WTC11 (cell line): ENCODE measurements at regions of chr10 and their contacts with region 1.

Region 1: DNA sequence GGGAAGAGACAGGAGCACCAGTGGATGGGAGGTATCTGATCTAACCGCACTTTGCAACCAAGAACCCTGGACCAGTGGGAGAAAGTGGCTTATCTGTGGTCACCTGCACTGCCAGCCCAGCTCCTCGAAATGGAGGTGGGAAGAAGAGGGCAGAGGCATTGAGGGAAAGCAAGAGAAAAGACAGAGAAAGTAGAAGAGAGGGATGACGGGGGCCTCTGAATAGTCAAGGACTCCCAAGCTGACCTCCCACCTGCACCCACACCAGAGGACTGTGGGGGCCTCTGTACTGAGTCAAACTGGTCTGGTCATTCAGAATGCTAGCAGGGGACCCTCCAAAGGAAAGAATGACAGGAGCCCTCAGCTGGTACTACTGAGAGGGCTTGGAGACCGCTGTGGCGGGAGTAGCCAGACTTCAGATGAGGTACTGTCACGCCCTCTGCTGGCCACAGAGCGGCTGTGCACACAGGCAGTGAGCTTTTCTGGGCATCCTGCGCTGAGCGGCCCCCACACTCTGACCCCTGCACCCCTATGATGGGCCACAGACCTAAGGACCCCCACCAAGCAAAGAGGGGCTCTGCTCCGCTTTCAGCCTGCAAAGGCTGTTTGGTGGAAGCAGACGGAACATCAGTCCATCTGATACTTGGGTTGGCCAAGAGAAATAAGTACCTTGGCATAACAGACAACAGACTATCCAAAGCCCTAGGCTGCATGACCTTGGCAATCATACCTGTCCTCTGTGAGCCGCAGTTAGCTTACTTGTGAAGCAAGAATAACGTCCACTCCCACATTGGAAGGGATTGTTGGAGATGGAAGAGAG is 112.9 kb downstream of the COL13A1 start:
- DNase-seq: peak; percentile 87
- ATAC-seq: peak; percentile 89
- H3K4me3 Mint-ChIP-seq: no peak overlapping the region
- H3K27ac Mint-ChIP-seq: no peak overlapping the region
- H3K4me1 Mint-ChIP-seq: peaks cover 23% of the 10 kb centered on the region
- H3K27me3 Mint-ChIP-seq: peaks cover 3% of the 10 kb centered on the region; the same call in 1 of the 2 replicates
- CTCF ChIP-seq: peak; percentile 99

Region 2: DNA sequence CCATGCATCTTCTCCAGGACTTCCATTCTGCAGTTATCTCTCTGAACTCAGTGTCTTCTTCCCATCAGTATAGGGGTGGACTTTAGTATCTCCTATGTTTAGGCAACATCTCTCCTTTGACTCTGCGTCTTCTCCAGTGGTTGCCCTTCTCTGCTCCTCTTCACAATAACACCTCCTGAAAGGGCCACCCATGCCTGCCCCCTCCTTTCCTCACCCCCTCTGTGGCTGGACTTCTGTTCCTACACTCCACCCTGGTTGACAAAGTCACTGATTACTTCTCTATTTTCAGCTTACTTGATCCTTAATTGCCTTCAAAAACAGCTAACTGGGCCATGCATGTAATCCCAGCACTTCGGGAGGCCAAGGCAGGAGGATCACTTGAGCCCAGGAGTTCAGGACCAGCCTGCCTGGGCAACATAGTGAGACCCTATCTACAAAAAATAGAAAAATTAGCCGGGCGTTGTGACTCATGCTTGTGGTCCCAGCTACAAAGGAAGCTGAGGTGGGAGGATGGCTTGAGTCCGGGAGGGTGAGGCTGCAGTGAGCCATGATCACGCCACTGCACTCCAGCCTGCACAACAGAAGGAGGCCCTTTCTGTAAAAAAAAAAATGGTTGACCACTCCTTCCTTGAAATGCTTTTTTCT is 813.0 kb before region 1 on chr10:
- CTCF ChIA-PET with region 1: no interaction called
- POLR2A ChIA-PET with region 1: no interaction called
- DNase-seq: no peak
- ATAC-seq: no peak
- H3K4me3 Mint-ChIP-seq: no peak overlapping the region
- H3K27ac Mint-ChIP-seq: no peak overlapping the region
- H3K4me1 Mint-ChIP-seq: peaks cover 4% of the 10 kb centered on the region
- H3K27me3 Mint-ChIP-seq: no peaks in the 10 kb centered on the region
- CTCF ChIP-seq: no peak

Region 3: DNA sequence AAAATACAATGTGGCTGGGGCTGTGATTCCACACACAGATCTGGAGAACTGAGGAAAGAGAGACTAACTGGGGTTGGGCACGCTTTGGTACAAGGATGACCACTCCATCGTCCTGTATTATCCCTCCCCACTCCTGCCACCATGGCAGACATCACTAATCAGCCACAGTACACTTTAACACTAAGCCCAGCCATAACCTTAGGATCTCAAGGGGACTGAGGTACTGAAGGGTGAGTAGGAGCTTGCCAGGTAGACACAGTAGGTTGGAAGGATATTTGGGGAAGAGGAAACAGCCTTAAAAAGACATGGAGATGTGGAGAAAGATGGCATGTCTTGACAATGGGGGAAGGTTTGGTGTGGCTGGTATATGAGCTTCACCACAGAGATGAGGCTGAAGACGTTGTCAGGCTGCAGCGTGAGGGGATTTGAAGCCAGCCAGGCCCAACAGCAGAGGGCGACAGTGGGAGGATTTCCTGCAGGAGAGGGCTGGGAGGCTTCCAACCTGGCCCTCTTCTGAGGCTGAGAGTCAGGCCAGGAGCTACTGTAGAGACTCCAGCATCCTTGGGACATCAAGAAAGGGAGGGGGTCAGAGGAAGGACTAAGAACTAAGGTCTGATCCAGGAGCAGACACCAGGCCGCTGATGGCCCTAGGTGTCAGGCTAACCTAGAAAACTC is 171.5 kb before region 1 on chr10:
- CTCF ChIA-PET with region 1: interaction called, 56 read pairs
- POLR2A ChIA-PET with region 1: no interaction called
- DNase-seq: peak; percentile 79
- ATAC-seq: peak; percentile 92
- H3K4me3 Mint-ChIP-seq: no peak overlapping the region
- H3K27ac Mint-ChIP-seq: no peak overlapping the region
- H3K4me1 Mint-ChIP-seq: 0 out of 2 replicates have a peak, but pooled peaks cover 6% of the 10 kb centered on the region
- H3K27me3 Mint-ChIP-seq: peaks cover 4% of the 10 kb centered on the region
- CTCF ChIP-seq: 0 out of 2 replicates have a peak, but pooled peaks have one; percentile 28

Region 4: GRCh38 chr10:69807122-69807521 is 107.5 kb before region 1 on chr10:
- CTCF ChIA-PET with region 1: interaction called, 92 read pairs
- POLR2A ChIA-PET with region 1: no interaction called
- DNase-seq: no peak
- ATAC-seq: no peak
- H3K4me3 Mint-ChIP-seq: no peak overlapping the region
- H3K27ac Mint-ChIP-seq: no peak overlapping the region
- H3K4me1 Mint-ChIP-seq: peaks cover 38% of the 10 kb centered on the region
- H3K27me3 Mint-ChIP-seq: peaks cover 33% of the 10 kb centered on the region
- CTCF ChIP-seq: no peak

Region 5: GRCh38 chr10:69839696-69840345 is 74.8 kb before region 1 on chr10:
- CTCF ChIA-PET with region 1: interaction called, 13 read pairs
- POLR2A ChIA-PET with region 1: no interaction called
- DNase-seq: no peak
- ATAC-seq: no peak
- H3K4me3 Mint-ChIP-seq: no peak overlapping the region
- H3K27ac Mint-ChIP-seq: no peak overlapping the region
- H3K4me1 Mint-ChIP-seq: peaks cover 43% of the 10 kb centered on the region
- H3K27me3 Mint-ChIP-seq: no peaks in the 10 kb centered on the region
- CTCF ChIP-seq: no peak

Region 6: GRCh38 chr10:69869291-69869961 is 45.2 kb before region 1 on chr10:
- CTCF ChIA-PET with region 1: interaction called, 84 read pairs
- POLR2A ChIA-PET with region 1: interaction called, 3 read pairs
- DNase-seq: no peak
- ATAC-seq: no peak
- H3K4me3 Mint-ChIP-seq: no peak overlapping the region
- H3K27ac Mint-ChIP-seq: no peak overlapping the region
- H3K4me1 Mint-ChIP-seq: peaks cover 93% of the 10 kb centered on the region
- H3K27me3 Mint-ChIP-seq: peaks cover 18% of the 10 kb centered on the region
- CTCF ChIP-seq: no peak

Region 7: DNA sequence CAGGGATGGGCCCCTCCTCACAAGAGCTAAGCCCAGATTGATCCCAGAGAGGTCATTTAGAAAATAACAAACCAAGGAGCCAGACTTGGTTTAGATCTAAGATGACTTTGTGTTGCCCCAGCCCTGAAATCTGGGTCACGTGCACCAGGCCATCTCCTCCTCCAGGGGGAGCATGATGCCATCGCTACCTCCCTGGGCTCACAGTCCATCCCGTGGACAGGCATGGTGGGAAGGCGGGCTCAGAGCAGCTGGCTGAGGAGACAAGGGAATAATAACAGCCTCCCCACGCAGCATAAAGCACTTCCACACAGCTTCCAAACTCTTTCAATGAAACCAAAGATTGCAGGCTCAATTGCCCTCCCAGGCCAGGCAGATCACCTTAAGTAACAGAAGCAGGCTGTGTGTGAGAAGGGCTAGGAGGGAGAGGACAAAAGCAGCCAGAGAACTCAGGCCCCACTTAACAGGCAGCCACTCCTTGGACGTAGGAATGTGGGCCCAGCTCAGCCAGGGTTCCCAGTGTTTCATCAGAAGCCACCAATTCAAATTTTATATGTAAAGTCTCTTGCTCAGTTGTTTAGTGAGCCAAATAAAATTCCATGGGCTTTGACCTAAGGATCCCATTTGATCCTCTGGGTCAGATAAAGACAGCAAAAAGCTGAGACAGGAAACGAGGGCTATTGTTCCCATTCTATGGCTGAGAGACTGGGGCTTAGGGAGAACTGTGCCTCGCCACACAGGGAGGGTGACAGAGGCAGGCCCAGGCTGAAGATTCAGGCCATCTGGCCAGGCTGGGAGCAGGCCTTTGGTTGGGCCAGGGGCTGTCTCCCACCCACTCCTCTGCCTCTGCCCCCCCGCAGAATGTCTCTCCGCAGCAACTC is 12.7 kb before region 1 on chr10:
- CTCF ChIA-PET with region 1: interaction called, 126 read pairs
- POLR2A ChIA-PET with region 1: no interaction called
- DNase-seq: peak; percentile 77
- ATAC-seq: peak; percentile 86
- H3K4me3 Mint-ChIP-seq: no peak overlapping the region
- H3K27ac Mint-ChIP-seq: peak overlapping the region; percentile 86
- H3K4me1 Mint-ChIP-seq: peaks cover 35% of the 10 kb centered on the region
- H3K27me3 Mint-ChIP-seq: peaks cover 3% of the 10 kb centered on the region
- CTCF ChIP-seq: peak; percentile 61; the same call in 1 of the 2 replicates

Region 8: DNA sequence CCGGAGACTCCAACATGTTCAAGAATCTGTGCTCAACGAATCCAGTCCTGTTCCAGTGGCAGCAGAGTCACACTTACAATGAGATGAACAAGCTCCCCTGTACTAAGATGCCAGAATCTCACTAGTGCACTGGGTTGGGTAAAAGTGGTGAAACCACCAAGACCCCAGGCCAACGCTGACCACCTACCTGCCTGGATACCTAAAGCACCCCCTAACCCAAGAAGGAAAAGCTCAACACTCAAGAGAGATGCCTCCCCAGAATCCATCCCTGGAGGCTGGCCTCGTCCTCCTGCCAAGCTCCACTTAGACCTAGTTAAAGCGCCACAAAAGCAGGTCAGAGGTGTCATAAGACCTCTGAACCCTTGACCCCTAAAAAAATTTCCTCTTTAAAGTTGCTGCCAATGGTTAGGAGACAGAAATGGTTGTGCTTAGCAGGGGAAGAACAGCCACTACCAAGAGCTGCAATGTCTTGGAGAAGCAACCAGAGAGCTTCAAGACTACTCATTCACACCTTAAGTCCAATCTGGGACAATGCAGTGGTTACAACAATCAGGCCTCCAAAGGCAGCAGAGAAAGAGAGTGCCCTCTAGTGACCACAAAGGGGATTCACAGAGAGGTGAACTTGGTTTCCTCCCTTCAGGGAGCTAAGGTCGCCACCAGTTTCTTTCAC is 43.4 kb after region 1 on chr10:
- CTCF ChIA-PET with region 1: interaction called, 75 read pairs
- POLR2A ChIA-PET with region 1: interaction called, 3 read pairs
- DNase-seq: peak; percentile 34
- ATAC-seq: peak; percentile 82
- H3K4me3 Mint-ChIP-seq: no peak overlapping the region
- H3K27ac Mint-ChIP-seq: no peak overlapping the region
- H3K4me1 Mint-ChIP-seq: peaks cover 2% of the 10 kb centered on the region
- H3K27me3 Mint-ChIP-seq: peaks cover 10% of the 10 kb centered on the region
- CTCF ChIP-seq: peak; percentile 60

Region 9: GRCh38 chr10:69974551-69975155 is 60.0 kb after region 1 on chr10:
- CTCF ChIA-PET with region 1: no interaction called
- POLR2A ChIA-PET with region 1: no interaction called
- DNase-seq: no peak
- ATAC-seq: no peak
- H3K4me3 Mint-ChIP-seq: no peak overlapping the region
- H3K27ac Mint-ChIP-seq: no peak overlapping the region
- H3K4me1 Mint-ChIP-seq: peaks cover 10% of the 10 kb centered on the region
- H3K27me3 Mint-ChIP-seq: peaks cover 41% of the 10 kb centered on the region
- CTCF ChIP-seq: no peak

Region 10: GRCh38 chr10:69994262-69994661 is 79.7 kb after region 1 on chr10:
- CTCF ChIA-PET with region 1: no interaction called
- POLR2A ChIA-PET with region 1: no interaction called
- DNase-seq: no peak
- ATAC-seq: peak; percentile 65; the same call in 1 of the 2 replicates
- H3K4me3 Mint-ChIP-seq: no peak overlapping the region
- H3K27ac Mint-ChIP-seq: no peak overlapping the region
- H3K4me1 Mint-ChIP-seq: no peaks in the 10 kb centered on the region
- H3K27me3 Mint-ChIP-seq: peaks cover 15% of the 10 kb centered on the region
- CTCF ChIP-seq: no peak

Region 11: GRCh38 chr10:70125918-70126552 is 211.4 kb after region 1 on chr10:
- CTCF ChIA-PET with region 1: no interaction called
- POLR2A ChIA-PET with region 1: no interaction called
- DNase-seq: no peak
- ATAC-seq: peak; percentile 70
- H3K4me3 Mint-ChIP-seq: no peak overlapping the region
- H3K27ac Mint-ChIP-seq: no peak overlapping the region
- H3K4me1 Mint-ChIP-seq: no peaks in the 10 kb centered on the region
- H3K27me3 Mint-ChIP-seq: 0 out of 2 replicates have a peak, but pooled peaks cover under 1% of the 10 kb centered on the region
- CTCF ChIP-seq: no peak